B cell (primary cell): ENCODE measurements at regions of chr12 and their contacts with region 1.

Region 1: GRCh38 chr12:49567611-49568441 is at the start of gene MCRS1:
- DNase-seq: peak; percentile 96
- ATAC-seq: peak; percentile 92
- H3K4me3 ChIP-seq: peak within 1 kb of the TSS; percentile 62 to 98 (median 91)
- H3K4me3 Mint-ChIP-seq: peak within 1 kb of the TSS; percentile 99
- H3K27ac ChIP-seq: peak within 1 kb of the TSS; percentile 91 to 97
- H3K27ac Mint-ChIP-seq: peak within 1 kb of the TSS; percentile 99
- H3K4me1 ChIP-seq: peaks cover 15 to 29% of the 10 kb centered on the region in 2 donors
- H3K4me1 Mint-ChIP-seq: peaks cover 28% of the 10 kb centered on the region
- H3K27me3 ChIP-seq: no peaks in the 10 kb centered on the region
- H3K27me3 Mint-ChIP-seq: no peaks in the 10 kb centered on the region
- CTCF ChIP-seq: no peak
- total RNA-seq, gene MCRS1: 81.1 and 84.3 TPM in 2 replicates

Region 2: DNA sequence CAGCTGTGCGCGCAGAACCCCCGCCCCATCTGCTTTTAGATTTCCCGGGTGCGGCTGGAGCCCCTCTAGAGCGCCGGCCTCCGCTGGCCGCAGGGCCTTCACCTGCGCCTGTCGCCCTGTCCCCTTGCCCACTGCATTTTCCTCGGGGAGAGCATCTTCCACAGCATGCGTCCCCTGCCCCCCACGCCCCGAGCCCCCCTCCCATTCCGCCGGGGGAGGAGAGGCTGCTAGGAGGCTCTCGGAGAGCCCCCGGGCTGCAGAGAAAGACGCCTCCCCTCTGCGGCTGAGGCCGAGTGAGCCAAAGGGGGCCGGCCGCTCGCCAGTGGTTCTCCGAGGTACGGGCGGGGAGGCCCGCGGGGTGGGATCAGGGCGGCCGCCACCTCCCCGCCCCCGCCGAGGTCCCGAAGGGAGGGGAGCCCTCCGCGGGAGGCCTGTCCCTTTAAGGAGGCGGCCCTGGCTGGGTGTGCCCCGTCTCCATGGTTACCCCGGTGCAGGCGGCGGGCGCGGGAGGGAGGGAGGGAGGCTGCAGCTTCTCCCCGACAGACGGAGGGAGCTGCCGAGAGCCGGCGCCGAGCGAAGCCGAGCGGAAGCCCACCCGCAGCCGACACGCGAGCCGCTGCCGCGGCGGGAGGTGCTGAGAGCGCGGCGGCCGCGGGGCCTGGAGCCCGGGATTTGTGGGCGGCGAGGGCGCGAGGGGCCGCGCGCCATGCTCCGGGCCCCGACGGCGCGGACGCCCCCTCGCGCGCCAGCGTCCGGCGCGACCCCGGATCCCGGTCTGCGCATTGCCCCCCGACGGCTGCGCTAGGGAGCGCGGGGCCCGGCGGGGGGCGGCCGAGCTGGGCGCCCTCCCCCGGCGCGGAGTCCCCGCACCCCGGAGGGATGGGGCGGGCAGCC is 29.1 kb before region 1 on chr12 and contains the start of gene KCNH3:
- CTCF ChIA-PET with region 1: no interaction called
- POLR2A ChIA-PET with region 1: no interaction called
- intact Hi-C with region 1: loop called (anchors 1 kb)
- DNase-seq: peak; percentile 90
- ATAC-seq: peak; percentile 82
- H3K4me3 ChIP-seq: peak within 1 kb of the TSS; percentile 40 to 76 (median 48)
- H3K4me3 Mint-ChIP-seq: peak within 1 kb of the TSS; percentile 82
- H3K27ac ChIP-seq: no peak within 1 kb of the TSS
- H3K27ac Mint-ChIP-seq: no peak within 1 kb of the TSS
- H3K4me1 ChIP-seq: peaks cover 33 to 49% of the 10 kb centered on the region in 2 donors
- H3K4me1 Mint-ChIP-seq: peaks cover 44% of the 10 kb centered on the region
- H3K27me3 ChIP-seq: peaks cover 0 to 42% (median 13%) of the 10 kb centered on the region in 4 experiments
- H3K27me3 Mint-ChIP-seq: peaks cover 31% of the 10 kb centered on the region
- CTCF ChIP-seq: no peak
- total RNA-seq, gene KCNH3: 0.19 and 0.54 TPM in 2 replicates

Region 3: GRCh38 chr12:49604856-49605255 is 37.0 kb after region 1 on chr12:
- CTCF ChIA-PET with region 1: no interaction called
- POLR2A ChIA-PET with region 1: no interaction called
- intact Hi-C with region 1: no loop called
- DNase-seq: no peak
- ATAC-seq: no peak
- H3K4me3 ChIP-seq: no peak overlapping the region
- H3K4me3 Mint-ChIP-seq: no peak overlapping the region
- H3K27ac ChIP-seq: no peak overlapping the region
- H3K27ac Mint-ChIP-seq: no peak overlapping the region
- H3K4me1 ChIP-seq: no peaks in the 10 kb centered on the region
- H3K4me1 Mint-ChIP-seq: no peaks in the 10 kb centered on the region
- H3K27me3 ChIP-seq: no peaks in the 10 kb centered on the region
- H3K27me3 Mint-ChIP-seq: peaks cover 5% of the 10 kb centered on the region
- CTCF ChIP-seq: no peak

Region 4: DNA sequence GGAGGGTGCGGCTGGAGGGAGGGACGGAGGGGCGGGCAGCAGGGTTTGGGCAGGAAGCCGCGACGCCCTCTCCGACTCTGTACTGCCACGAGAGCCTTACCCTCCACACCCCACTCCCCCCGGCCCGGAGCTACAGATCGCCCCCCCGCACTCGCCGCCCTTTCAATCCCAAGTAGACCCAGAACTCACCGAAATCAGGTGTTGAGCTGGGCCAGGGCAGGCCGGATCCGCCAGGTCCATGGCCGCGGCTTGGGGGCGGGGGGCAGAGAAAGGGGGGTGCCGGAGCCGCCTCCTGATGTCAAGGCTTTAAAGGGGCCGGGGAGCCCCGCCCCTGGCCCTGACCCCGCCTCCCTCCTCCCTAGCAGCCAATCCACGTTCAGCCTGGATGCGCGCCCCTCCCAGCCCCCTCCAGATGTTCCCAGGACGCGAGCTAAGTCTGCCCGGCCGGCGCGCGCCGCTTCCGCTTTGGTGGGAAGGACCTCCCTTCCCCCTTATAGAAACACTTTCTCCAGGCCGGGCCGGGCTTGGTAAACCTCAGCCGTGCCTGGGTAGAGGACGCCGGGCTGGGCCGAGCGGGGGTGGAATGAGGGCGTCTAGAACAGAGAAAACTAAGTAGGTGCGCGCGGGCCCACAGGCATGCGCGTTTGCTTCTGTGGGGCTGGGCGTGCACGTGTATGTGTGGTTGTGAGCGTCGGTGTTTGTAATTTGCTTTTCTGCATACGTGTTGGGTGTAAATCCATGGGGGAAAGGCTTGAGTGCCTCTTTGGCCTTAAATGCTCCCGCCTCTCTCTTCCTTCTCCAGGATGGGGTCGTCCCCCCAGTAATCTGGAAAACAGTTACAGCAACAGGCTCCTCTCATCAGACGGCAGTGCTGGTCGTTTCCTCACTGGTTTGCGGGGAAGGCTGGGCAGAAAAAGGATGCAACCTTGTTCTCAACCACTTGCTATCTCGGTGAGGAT is 260.6 kb after region 1 on chr12 and contains the start of gene NCKAP5L:
- CTCF ChIA-PET with region 1: no interaction called
- POLR2A ChIA-PET with region 1: interaction called, 12 read pairs
- intact Hi-C with region 1: loop called (anchors 5 kb)
- DNase-seq: peak; percentile 96
- ATAC-seq: peak; percentile 98
- H3K4me3 ChIP-seq: peak within 1 kb of the TSS; percentile 60 to 84 (median 73)
- H3K4me3 Mint-ChIP-seq: peak within 1 kb of the TSS; percentile 99
- H3K27ac ChIP-seq: peak within 1 kb of the TSS; percentile 36 to 75
- H3K27ac Mint-ChIP-seq: peak within 1 kb of the TSS; percentile 97
- H3K4me1 ChIP-seq: peaks cover 26% of the 10 kb centered on the region in 2 donors
- H3K4me1 Mint-ChIP-seq: peaks cover 39% of the 10 kb centered on the region
- H3K27me3 ChIP-seq: no peaks in the 10 kb centered on the region
- H3K27me3 Mint-ChIP-seq: no peaks in the 10 kb centered on the region
- CTCF ChIP-seq: no peak
- total RNA-seq, gene NCKAP5L: 13.2 and 13.4 TPM in 2 replicates